IMR-90 (cell line): ENCODE measurements at regions of chr17 and their contacts with region 1.

Region 1: DNA sequence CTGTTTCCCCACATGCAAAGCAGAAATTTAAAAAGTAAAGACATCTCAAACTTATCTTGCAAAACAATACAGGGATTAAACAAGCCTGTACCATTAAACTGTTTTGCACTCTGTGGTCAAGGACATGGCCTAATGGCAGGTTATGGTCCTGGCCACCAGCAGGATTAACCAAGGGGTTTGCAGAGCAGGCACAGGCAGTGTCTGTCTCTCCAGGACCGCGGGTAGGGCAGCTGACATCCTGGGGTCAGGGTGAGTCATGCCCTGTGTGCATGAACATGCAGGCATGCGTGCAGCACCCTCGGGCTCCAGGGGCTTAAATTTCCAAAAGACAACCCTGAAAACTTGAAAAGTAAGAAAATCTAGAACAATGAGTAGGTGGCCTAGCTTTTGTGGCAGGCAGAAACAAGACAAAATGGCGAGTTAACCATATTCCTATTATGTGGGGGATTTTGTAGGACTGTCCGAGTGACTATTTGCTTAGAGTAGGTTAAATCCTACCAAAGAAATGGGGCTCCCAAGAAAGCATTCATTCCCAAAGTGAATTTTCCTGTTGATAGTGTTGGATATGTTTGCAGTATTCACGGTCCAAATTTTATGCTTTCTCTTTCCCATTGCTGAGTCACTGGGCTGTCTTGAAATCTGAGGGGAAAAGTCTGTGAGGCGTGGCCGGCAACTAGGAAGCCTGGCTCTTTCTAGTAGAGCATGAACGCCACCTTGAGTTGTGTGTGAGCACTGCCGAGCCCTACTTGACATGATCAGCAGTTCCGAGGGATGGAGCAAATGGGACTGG is 158.4 kb upstream of the FAM20A start:
- DNase-seq: peak; percentile 93
- ATAC-seq: peak; percentile 98
- H3K4me3 ChIP-seq: peak overlapping the region; percentile 27; the same call in 1 of the 2 replicates
- H3K27ac ChIP-seq: peak overlapping the region; percentile 53
- H3K4me1 ChIP-seq: no peaks in the 10 kb centered on the region
- H3K27me3 ChIP-seq: no peaks in the 10 kb centered on the region
- CTCF ChIP-seq: peak; percentile 98
- POLR2A ChIP-seq: peak; percentile 64
- RAD21 ChIP-seq: peak; percentile 95

Region 2: DNA sequence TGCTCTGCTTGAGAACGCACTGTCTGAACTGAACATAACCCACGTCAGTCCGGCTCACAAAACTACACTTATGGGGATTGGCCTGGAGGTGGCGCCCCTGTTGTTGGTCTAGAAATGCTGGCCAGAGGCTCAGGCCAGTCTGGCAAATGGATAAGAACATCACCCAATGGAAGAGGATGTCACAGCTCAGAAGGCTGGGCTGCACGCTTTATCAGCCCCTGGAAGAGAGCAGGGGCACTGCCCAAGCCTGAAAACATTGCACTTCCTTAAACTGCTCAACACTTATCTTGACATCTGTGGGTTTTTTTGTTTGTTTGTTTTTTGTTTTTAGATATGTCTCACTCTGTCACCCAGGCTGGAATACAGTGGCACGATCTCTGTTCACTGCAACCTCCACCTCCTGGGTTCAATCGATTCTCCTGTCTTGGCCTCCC is 959.0 kb before region 1 on chr17:
- CTCF ChIA-PET with region 1: no interaction called
- POLR2A ChIA-PET with region 1: no interaction called
- dilution Hi-C with region 1: no loop called
- in situ Hi-C with region 1: no loop called
- intact Hi-C with region 1: no loop called
- DNase-seq: peak; percentile 75
- ATAC-seq: peak; percentile 99
- H3K4me3 ChIP-seq: no peak overlapping the region
- H3K27ac ChIP-seq: no peak overlapping the region
- H3K4me1 ChIP-seq: no peaks in the 10 kb centered on the region
- H3K27me3 ChIP-seq: peaks cover 4% of the 10 kb centered on the region; the same call in 1 of the 2 replicates
- CTCF ChIP-seq: peak; percentile 79
- POLR2A ChIP-seq: no peak
- RAD21 ChIP-seq: peak; percentile 81

Region 3: DNA sequence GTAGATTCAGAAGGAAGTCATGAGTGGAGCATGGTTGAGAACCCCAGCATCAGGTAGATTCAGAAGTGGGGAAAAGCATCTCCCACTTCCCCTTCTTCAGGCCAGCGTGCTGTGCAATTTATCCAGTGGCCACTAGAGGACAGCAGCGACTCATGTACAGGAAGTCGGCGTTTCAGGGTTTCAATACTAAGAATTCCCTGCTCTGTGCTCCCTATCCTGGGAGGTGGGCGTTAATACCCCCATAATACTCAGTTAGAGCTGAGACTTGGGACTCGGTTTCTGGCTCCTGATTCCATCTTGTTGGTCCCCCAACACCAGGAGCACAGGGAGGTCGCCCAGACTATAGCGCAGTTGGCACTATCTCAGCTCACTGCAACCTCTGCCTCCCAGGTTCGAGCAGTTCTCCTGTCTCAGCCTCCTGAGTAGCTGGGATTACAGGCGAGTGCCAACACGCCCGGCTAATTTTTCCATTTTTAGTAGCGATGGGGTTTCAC is 587.0 kb before region 1 on chr17:
- CTCF ChIA-PET with region 1: no interaction called
- POLR2A ChIA-PET with region 1: no interaction called
- dilution Hi-C with region 1: no loop called
- in situ Hi-C with region 1: loop called (anchors 25 kb)
- intact Hi-C with region 1: loop called (anchors 10 kb)
- DNase-seq: peak; percentile 49
- ATAC-seq: peak; percentile 96
- H3K4me3 ChIP-seq: no peak overlapping the region
- H3K27ac ChIP-seq: no peak overlapping the region
- H3K4me1 ChIP-seq: peaks cover 3% of the 10 kb centered on the region; the same call in 1 of the 2 replicates
- H3K27me3 ChIP-seq: peaks cover 3% of the 10 kb centered on the region; the same call in 1 of the 2 replicates
- CTCF ChIP-seq: peak; percentile 88
- POLR2A ChIP-seq: no peak
- RAD21 ChIP-seq: peak; percentile 87

Region 4: DNA sequence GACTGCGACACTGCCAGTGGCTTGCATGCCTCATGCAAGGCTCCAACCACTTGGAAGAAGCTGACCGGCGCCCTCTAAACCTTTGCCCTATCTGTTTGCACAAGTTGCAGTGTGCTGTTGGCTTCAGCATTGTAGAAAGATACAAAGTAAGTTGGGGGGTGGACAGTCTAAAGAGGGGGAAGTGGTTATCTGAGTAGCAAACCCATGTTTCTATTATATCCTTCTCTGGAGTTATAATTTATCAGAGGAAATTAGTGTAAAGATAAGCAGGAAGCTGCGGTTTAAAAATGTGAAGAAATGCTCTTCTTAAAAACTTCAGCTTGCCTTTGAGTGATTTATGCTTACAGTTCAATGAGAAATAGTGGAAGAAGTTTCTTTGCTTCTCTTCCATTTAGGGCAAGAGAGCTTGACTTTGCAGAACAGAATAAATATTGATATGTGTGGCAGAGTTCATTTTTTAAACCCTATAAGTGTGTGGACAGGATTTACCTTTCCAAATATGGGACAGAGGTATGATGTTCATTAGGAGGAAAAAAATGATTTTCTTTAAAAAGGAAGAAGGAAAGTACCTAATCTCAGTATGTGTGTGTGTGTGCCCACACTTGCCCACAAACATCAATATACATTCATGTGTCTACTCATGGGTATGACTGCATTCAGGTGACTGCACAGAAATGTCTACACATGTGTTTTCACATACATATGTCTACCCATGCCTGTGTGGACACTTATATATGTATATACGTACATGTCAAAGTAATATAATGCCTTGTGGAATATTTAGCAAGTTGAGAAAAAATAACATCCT is 503.6 kb before region 1 on chr17:
- CTCF ChIA-PET with region 1: no interaction called
- POLR2A ChIA-PET with region 1: no interaction called
- dilution Hi-C with region 1: no loop called
- in situ Hi-C with region 1: loop called (anchors 25 kb)
- intact Hi-C with region 1: loop called (anchors 10 kb)
- DNase-seq: no peak
- ATAC-seq: no peak
- H3K4me3 ChIP-seq: no peak overlapping the region
- H3K27ac ChIP-seq: no peak overlapping the region
- H3K4me1 ChIP-seq: no peaks in the 10 kb centered on the region
- H3K27me3 ChIP-seq: no peaks in the 10 kb centered on the region
- CTCF ChIP-seq: no peak
- POLR2A ChIP-seq: no peak
- RAD21 ChIP-seq: no peak

Region 5: DNA sequence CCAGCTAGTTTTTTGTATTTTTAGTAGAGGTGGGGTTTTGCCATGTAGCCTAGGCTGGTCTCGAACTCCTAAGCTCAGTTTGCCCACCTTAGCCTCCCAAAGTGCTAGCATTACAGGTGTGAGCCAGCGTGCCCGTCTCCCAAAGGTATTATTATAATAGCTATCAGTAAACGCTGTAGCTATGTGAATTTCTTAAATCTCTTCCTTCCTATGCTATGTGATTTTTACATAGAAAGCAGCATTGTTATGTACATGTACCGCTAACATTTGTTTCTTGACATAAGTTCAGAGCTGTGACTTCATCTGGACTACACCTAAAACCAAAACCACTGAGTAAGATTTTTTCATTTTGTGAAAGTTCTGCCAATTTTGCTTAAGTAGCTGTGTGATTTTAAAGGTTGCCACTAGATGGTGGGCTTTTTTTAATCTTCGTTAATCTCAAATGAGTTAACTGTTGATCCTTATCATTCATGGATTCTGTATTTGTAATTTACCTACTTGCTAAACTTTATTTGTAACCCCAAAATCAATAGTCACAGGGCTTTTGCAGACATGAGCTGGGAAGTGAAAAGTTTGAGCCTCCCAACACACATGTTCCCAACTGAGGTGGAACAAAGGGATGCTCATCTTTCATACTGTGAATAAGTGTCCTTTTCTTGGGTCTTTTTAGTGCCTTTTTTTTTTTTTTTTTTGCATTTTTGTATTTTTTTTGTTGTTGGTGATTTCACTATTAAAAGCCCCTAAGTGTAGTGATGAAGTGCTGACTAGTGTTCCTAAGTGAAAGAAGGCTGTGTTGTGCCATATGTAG is 225.4 kb before region 1 on chr17:
- CTCF ChIA-PET with region 1: interaction called, 5 read pairs
- POLR2A ChIA-PET with region 1: no interaction called
- dilution Hi-C with region 1: no loop called
- in situ Hi-C with region 1: loop called (anchors 5 kb)
- intact Hi-C with region 1: loop called (anchors 1 kb)
- DNase-seq: peak; percentile 50
- ATAC-seq: peak; percentile 42; the same call in 1 of the 2 replicates
- H3K4me3 ChIP-seq: no peak overlapping the region
- H3K27ac ChIP-seq: no peak overlapping the region
- H3K4me1 ChIP-seq: no peaks in the 10 kb centered on the region
- H3K27me3 ChIP-seq: no peaks in the 10 kb centered on the region
- CTCF ChIP-seq: peak; percentile 43
- POLR2A ChIP-seq: no peak
- RAD21 ChIP-seq: no peak

Region 6: DNA sequence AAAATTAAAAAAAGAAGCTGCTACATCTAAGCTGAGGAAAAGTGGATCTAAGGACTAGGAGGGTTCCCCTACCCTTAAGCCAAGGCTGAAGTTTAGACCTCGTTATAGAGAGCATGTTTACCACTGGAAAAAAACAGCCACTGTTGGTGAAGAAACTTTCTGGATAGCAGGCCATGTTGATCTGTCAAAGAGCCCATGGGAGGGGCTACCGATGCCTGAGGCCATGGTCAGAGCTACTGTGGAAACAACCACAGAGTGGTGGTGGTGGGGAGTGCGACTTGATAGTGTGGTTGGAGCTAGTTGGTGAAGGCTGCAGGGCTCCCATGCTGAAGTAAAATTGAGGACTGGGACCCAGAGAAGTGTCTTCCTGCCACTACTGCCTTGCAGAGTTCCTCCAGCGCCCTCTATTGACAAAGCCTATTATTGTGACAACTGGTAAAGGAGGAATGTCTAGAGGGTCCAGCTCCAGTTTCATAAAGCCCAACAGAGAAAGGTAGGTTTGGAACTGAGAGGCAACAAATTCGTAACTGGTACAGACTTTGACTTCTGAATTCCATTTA is 145.7 kb before region 1 on chr17:
- CTCF ChIA-PET with region 1: no interaction called
- POLR2A ChIA-PET with region 1: no interaction called
- dilution Hi-C with region 1: no loop called
- in situ Hi-C with region 1: no loop called
- intact Hi-C with region 1: loop called (anchors 10 kb)
- DNase-seq: no peak
- ATAC-seq: 0 out of 2 replicates have a peak, but pooled peaks have one; percentile 32
- H3K4me3 ChIP-seq: no peak overlapping the region
- H3K27ac ChIP-seq: no peak overlapping the region
- H3K4me1 ChIP-seq: no peaks in the 10 kb centered on the region
- H3K27me3 ChIP-seq: no peaks in the 10 kb centered on the region
- CTCF ChIP-seq: 0 out of 2 replicates have a peak, but pooled peaks have one; percentile 20
- POLR2A ChIP-seq: no peak
- RAD21 ChIP-seq: no peak

Region 7: GRCh38 chr17:68794636-68795434 is 35.3 kb after region 1 on chr17:
- CTCF ChIA-PET with region 1: no interaction called
- POLR2A ChIA-PET with region 1: no interaction called
- dilution Hi-C with region 1: no loop called
- in situ Hi-C with region 1: no loop called
- intact Hi-C with region 1: no loop called
- DNase-seq: peak; percentile 60
- ATAC-seq: peak; percentile 68
- H3K4me3 ChIP-seq: no peak overlapping the region
- H3K27ac ChIP-seq: peak overlapping the region; percentile 85
- H3K4me1 ChIP-seq: peaks cover 13% of the 10 kb centered on the region
- H3K27me3 ChIP-seq: no peaks in the 10 kb centered on the region
- CTCF ChIP-seq: peak; percentile 52
- POLR2A ChIP-seq: no peak
- RAD21 ChIP-seq: peak; percentile 23; the same call in 1 of the 2 replicates

Region 8: GRCh38 chr17:68849673-68850610 is 90.4 kb after region 1 on chr17:
- CTCF ChIA-PET with region 1: no interaction called
- POLR2A ChIA-PET with region 1: no interaction called
- dilution Hi-C with region 1: no loop called
- in situ Hi-C with region 1: no loop called
- intact Hi-C with region 1: no loop called
- DNase-seq: no peak
- ATAC-seq: no peak
- H3K4me3 ChIP-seq: no peak overlapping the region
- H3K27ac ChIP-seq: no peak overlapping the region
- H3K4me1 ChIP-seq: no peaks in the 10 kb centered on the region
- H3K27me3 ChIP-seq: no peaks in the 10 kb centered on the region
- CTCF ChIP-seq: no peak
- POLR2A ChIP-seq: no peak
- RAD21 ChIP-seq: no peak